OCI-LY7 (cell line): ENCODE measurements at regions of chr10 and their contacts with region 1.

Region 1: DNA sequence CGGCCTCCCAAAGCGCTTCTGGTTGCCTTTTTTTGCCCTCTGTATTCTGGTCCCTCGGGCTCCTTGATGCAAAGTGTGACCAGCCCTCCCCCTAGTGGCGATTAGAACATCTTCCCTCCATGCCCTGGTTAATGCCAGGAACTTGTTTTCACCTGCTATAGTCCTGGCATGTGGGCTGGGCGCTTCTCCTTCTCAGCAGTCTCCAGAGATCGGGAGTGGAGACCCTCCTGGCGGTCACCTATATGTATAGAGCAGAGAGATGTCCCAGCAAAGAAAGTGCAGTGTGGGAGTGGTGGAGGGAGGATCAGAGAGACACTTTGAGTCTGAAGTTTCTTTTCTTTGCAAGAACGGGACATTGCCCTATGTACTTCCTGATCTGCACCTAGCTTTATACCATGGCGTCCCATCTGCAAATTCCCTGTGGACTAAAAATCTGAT is 264.1 kb downstream of the OTUD1 start:
- DNase-seq: peak; percentile 72
- H3K4me3 ChIP-seq: no peak overlapping the region
- H3K27ac ChIP-seq: no peak overlapping the region
- H3K4me1 ChIP-seq: no peaks in the 10 kb centered on the region
- CTCF ChIP-seq: peak; percentile 79

Region 2: GRCh38 chr10:23540401-23541030 is 162.5 kb before region 1 on chr10:
- CTCF ChIA-PET with region 1: no interaction called
- POLR2A ChIA-PET with region 1: no interaction called
- intact Hi-C with region 1: loop called (anchors 5 kb)
- DNase-seq: peak; percentile 63
- H3K4me3 ChIP-seq: no peak overlapping the region
- H3K27ac ChIP-seq: no peak overlapping the region
- H3K4me1 ChIP-seq: peaks cover 16% of the 10 kb centered on the region
- CTCF ChIP-seq: no peak

Region 3: GRCh38 chr10:23686720-23687119 is 16.3 kb before region 1 on chr10:
- CTCF ChIA-PET with region 1: no interaction called
- POLR2A ChIA-PET with region 1: no interaction called
- intact Hi-C with region 1: no loop called
- DNase-seq: no peak
- H3K4me3 ChIP-seq: no peak overlapping the region
- H3K27ac ChIP-seq: no peak overlapping the region
- H3K4me1 ChIP-seq: no peaks in the 10 kb centered on the region
- CTCF ChIP-seq: no peak

Region 4: GRCh38 chr10:23718946-23719345 is 15.9 kb after region 1 on chr10:
- CTCF ChIA-PET with region 1: no interaction called
- POLR2A ChIA-PET with region 1: no interaction called
- intact Hi-C with region 1: no loop called
- DNase-seq: no peak
- H3K4me3 ChIP-seq: no peak overlapping the region
- H3K27ac ChIP-seq: no peak overlapping the region
- H3K4me1 ChIP-seq: no peaks in the 10 kb centered on the region
- CTCF ChIP-seq: no peak

Region 5: GRCh38 chr10:23793577-23793976 is 90.6 kb after region 1 on chr10:
- CTCF ChIA-PET with region 1: no interaction called
- POLR2A ChIA-PET with region 1: no interaction called
- intact Hi-C with region 1: no loop called
- DNase-seq: no peak
- H3K4me3 ChIP-seq: no peak overlapping the region
- H3K27ac ChIP-seq: no peak overlapping the region
- H3K4me1 ChIP-seq: no peaks in the 10 kb centered on the region
- CTCF ChIP-seq: no peak

Region 6: GRCh38 chr10:23981520-23982309 is 278.7 kb after region 1 on chr10:
- CTCF ChIA-PET with region 1: no interaction called
- POLR2A ChIA-PET with region 1: no interaction called
- intact Hi-C with region 1: no loop called
- DNase-seq: no peak
- H3K4me3 ChIP-seq: no peak overlapping the region
- H3K27ac ChIP-seq: no peak overlapping the region
- H3K4me1 ChIP-seq: no peaks in the 10 kb centered on the region
- CTCF ChIP-seq: peak; percentile 38; the same call in 1 of the 2 replicates